Dorsolateral prefrontal cortex (tissue), 120 donors: ENCODE measurements at regions of chr16 and their contacts with region 1.

Region 1: DNA sequence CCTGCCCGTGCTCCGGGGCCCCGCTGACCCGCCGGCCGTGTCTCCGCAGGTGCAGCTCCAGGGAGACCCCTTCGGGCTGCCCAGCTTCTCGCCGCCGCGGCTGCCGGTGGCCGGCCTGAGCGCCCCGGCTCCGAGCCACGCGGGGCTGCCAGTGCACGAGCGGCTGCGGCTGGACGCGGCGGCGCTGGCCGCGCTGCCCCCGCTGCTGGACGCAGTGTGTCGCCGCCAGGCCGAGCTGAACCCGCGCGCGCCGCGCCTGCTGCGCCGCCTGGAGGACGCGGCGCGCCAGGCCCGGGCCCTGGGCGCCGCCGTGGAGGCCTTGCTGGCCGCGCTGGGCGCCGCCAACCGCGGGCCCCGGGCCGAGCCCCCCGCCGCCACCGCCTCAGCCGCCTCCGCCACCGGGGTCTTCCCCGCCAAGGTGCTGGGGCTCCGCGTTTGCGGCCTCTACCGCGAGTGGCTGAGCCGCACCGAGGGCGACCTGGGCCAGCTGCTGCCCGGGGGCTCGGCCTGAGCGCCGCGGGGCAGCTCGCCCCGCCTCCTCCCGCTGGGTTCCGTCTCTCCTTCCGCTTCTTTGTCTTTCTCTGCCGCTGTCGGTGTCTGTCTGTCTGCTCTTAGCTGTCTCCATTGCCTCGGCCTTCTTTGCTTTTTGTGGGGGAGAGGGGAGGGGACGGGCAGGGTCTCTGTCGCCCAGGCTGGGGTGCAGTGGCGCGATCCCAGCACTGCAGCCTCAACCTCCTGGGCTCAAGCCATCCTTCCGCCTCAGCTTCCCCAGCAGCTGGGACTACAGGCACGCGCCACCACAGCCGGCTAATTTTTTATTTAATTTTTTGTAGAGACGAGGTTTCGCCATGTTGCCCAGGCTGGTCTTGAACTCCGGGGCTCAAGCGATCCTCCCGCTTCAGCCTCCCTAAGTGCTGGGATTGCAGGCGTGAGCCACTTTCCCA is 5.9 kb downstream of the CTF1 start:
- DNase-seq: peak in 5 of 10 donors; percentile 43 to 82 (median 47)
- H3K4me3 ChIP-seq: peak overlapping the region; percentile 47 to 74 (median 63)
- H3K27ac ChIP-seq: peak overlapping the region; percentile 71 to 97 (median 93)
- H3K27me3 ChIP-seq: no peaks in the 10 kb centered on the region
- CTCF ChIP-seq: peak in 17 of 56 donors; percentile 11 to 52 (median 18)

Region 2: DNA sequence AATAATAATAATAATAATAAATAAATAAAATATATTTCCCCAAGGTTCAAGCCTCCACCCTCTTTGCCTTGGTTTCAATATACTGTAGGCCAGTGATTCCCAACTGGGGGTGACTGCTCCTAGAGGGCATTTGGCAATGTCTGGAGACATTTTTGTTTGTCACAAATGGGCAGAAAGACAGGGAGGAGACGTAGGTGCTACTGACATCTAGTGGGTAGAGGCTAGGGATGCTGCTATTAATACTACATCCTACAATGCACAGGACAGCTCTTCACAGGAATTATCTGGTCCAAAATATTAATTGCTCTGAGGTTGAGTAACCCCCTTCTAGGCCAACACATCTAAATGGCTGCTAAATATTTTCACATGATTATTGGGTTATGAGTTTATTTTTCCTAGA is 264.4 kb before region 1 on chr16:
- intact Hi-C with region 1: no loop called
- DNase-seq: no peak
- H3K4me3 ChIP-seq: no peak overlapping the region
- H3K27ac ChIP-seq: no peak overlapping the region
- H3K27me3 ChIP-seq: no peaks in the 10 kb centered on the region
- CTCF ChIP-seq: peak in 10 of 56 donors; percentile 6 to 28 (median 14)

Region 3: GRCh38 chr16:30774367-30775130 is 127.8 kb before region 1 on chr16:
- intact Hi-C with region 1: no loop called
- DNase-seq: no peak
- H3K4me3 ChIP-seq: peak overlapping the region; percentile 55 to 100 (median 78)
- H3K27ac ChIP-seq: peak overlapping the region; percentile 1 to 96 (median 82)
- H3K27me3 ChIP-seq: no peaks in the 10 kb centered on the region
- CTCF ChIP-seq: no peak

Region 4: GRCh38 chr16:30844671-30845449 is 57.4 kb before region 1 on chr16:
- intact Hi-C with region 1: loop called (anchors 2 to 5 kb)
- DNase-seq: peak in 4 of 10 donors; percentile 30 to 59 (median 48)
- H3K4me3 ChIP-seq: peak overlapping the region in 24 of 59 donors; percentile 2 to 34 (median 24)
- H3K27ac ChIP-seq: peak overlapping the region in 32 of 59 donors; percentile 4 to 79 (median 53)
- H3K27me3 ChIP-seq: no peaks in the 10 kb centered on the region
- CTCF ChIP-seq: peak; percentile 42 to 89 (median 80)